AG04449 (cell line): ENCODE measurements at regions of chr11 and their contacts with region 1.

Region 1: DNA sequence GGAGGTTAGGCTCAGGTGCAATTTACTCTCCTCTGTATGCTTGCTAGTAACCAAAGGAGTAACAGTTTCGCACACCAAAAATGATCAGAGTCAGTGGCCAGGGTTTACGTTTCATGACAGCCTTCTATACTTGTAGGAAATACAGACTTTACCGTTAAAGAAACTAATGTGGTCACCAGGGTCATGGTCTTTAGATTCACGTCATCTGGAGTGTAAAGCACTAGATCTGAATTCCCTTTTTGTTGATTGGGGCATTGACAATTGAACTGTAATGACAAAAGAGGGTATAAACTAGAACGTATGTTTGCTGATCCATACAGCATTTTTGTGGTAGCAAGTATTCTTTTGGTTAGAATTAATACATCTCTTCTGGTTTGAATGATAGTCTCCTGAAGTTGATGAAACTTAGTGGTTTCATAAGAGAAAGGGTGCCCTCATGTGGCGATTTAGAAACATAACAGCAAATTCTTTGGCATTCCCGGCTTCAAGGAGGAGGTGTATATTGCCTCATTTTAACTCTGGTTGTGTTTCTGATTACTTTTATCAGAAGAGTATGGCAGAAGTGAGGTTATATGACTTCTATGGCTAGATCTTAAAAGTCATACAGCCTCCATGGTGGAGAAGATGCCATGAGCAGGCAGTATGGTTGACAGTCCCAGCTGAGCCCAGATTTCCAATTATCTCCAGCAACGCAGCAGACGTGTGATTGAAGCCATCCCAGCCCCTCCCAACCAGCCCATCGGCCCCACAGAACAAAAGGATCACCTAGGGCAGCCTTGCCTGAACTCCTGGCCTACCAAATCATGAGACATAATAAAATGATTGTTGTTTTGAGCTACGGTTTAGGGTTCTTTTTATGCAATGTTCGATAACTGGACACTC is 35.1 kb downstream of the MMP7 start:
- DNase-seq: peak; percentile 67
- H3K4me3 ChIP-seq: no peak overlapping the region
- CTCF ChIP-seq: peak; percentile 46

Region 2: GRCh38 chr11:102171101-102171500 is 324.3 kb before region 1 on chr11:
- CTCF ChIA-PET with region 1: no interaction called
- POLR2A ChIA-PET with region 1: no interaction called
- DNase-seq: peak; percentile 63
- H3K4me3 ChIP-seq: no peak overlapping the region
- CTCF ChIP-seq: no peak

Region 3: GRCh38 chr11:102367364-102367763 is 128.0 kb before region 1 on chr11:
- CTCF ChIA-PET with region 1: interaction called, 26 read pairs
- POLR2A ChIA-PET with region 1: no interaction called
- DNase-seq: no peak
- H3K4me3 ChIP-seq: no peak overlapping the region
- CTCF ChIP-seq: no peak

Region 4: DNA sequence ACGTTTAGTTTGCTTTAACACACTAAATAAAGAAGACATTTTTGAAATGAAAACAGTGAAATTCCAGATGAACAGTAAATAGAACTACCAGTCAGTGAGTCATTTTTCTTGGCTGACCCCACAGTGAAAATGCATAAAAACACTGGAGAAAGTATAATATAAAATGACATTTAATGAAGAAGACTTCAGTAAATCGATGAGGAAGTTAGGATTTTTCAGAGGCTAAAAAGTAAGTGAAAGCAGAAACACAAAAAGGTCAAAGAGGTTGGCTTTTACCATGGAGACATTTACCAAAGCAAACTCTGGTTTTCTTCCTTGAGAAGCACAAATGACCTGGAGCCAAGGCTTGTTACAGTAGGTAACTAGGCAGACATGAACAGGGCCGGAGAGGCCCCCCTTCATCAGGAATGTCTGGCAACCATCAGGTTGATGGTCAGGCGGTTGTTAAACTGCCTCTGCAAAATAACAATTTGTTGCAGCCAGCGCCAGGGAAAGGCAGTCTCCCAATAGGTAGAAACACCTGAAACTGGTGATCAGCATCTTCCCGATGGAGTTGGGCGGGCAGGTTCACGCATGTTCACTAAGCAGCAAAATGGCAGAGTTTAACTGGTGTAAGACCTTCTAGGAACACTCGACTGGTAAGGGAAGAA is 26.1 kb before region 1 on chr11:
- CTCF ChIA-PET with region 1: no interaction called
- POLR2A ChIA-PET with region 1: no interaction called
- DNase-seq: no peak
- H3K4me3 ChIP-seq: no peak overlapping the region
- CTCF ChIP-seq: no peak

Region 5: DNA sequence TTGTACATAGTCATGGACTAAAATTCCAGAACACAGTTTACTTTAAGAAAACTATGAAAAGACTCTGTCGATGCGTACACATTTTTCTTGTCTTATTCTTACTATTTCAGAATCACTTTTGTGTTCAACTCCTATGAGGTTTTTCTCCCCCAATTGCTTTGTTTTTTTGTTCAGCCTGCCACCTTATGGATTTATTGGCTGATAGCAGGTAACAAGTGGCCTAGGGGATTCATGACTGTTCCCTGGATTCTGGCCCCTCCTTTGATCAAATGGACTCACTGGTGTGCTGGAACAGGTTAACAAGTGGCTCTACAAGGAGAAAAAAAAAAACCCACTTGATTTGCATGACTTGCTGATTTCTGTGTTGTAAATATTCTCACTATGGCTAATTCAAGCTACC is 119.1 kb after region 1 on chr11:
- CTCF ChIA-PET with region 1: interaction called, 11 read pairs
- POLR2A ChIA-PET with region 1: no interaction called
- DNase-seq: no peak
- H3K4me3 ChIP-seq: no peak overlapping the region
- CTCF ChIP-seq: no peak